K562 (cell line): ENCODE measurements at regions of chr5 and their contacts with region 1.

Region 1: DNA sequence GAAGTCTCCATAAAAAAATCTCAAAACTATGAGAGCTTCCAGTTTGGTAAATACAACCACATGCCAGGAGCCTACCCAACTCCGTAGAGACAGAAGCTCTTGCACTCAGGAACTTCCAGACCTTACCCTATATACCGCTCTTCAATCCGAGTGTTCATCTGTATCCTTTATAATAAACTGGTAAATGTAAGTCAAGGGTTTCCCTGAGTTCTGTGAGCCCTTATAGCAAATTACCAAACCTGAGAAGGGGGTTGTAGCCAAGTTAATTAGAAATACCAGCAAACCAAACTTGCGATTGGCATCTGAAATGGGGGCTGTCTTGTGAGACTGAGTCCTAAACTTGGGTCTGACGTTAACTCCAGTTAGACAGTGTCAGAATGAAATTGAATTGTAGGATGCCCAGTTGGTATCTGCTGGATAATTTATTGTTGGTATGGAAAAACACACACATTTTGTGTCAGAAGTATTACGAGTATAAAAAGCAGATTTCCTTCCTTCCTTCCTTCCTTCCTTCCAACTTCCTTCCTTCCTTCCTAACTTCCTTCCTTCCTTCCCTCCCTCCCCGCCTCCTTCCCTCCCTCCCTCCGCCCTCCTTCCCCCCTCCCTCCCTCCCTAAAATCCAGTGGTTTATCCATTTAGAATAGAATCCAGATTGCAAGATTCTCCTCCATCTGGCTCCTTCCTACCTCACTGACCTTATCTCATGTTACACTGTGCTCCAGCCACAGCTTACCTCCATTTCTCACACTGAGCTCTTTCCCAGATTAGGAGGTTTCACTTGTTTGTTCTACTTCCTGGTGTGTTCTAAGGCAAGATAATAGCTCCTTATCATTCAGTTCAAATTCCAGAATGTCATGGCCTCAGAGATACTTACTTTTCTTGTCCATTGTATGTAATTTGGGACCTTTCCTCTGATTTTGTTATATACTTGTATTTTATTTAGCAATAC is 196.7 kb downstream of the WDR70 start:
- DNase-seq: peak; percentile 23 to 86 (median 60)
- ATAC-seq: peak; percentile 95
- H3K4me3 ChIP-seq: no peak overlapping the region
- H3K27ac ChIP-seq: no peak overlapping the region
- H3K4me1 ChIP-seq: peaks cover 0 to 19% of the 10 kb centered on the region in 2 experiments; a peak in 3 of 5 replicates
- H3K27me3 ChIP-seq: no peaks in the 10 kb centered on the region
- CTCF ChIP-seq: no peak
- EP300 ChIP-seq: peak; percentile 92
- POLR2A ChIP-seq: no peak
- RAD21 ChIP-seq: 0 out of 4 replicates have a peak, but pooled peaks of 1 of the 2 experiments have one; percentile 6

Region 2: DNA sequence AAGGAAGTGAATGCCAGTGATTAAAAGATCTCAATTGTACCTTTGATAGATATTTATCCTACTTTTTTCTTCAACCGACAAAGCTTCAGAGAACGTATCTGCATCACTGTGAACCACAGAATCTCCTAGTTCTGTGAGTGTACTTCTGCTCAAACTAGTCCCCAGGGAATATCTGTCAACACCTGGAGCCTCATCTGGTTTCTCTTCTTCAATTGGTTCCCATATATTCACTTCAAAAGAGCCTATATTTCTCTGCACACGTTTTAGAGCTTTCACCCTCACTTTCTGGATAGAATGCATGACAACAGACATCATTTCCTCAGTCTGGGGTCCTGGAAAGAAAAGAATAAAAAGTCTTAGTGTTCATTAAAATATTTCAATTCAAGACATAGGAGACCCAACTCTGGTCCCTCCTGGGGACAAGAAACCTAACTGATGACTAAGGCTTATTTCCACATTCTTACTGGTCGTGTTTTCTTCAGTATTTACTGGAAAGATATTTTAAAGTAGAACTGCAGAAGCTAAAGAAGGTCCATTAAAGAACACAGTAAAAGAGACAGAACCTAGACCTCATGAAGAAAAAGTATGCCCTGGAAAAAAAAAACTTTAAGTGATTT is 391.0 kb before region 1 on chr5:
- CTCF ChIA-PET with region 1: no interaction called
- POLR2A ChIA-PET with region 1: no interaction called
- in situ Hi-C with region 1: no loop called
- intact Hi-C with region 1: no loop called
- DNase-seq: no peak
- ATAC-seq: no peak
- H3K4me3 ChIP-seq: no peak overlapping the region
- H3K27ac ChIP-seq: no peak overlapping the region
- H3K4me1 ChIP-seq: 0 out of 5 replicates have a peak, but pooled peaks cover 0 to 2% of the 10 kb centered on the region in 2 experiments
- H3K27me3 ChIP-seq: peaks cover 0 to 3% of the 10 kb centered on the region in 2 experiments; a peak in 1 of 5 replicates
- CTCF ChIP-seq: no peak
- EP300 ChIP-seq: no peak
- POLR2A ChIP-seq: no peak
- RAD21 ChIP-seq: no peak

Region 3: DNA sequence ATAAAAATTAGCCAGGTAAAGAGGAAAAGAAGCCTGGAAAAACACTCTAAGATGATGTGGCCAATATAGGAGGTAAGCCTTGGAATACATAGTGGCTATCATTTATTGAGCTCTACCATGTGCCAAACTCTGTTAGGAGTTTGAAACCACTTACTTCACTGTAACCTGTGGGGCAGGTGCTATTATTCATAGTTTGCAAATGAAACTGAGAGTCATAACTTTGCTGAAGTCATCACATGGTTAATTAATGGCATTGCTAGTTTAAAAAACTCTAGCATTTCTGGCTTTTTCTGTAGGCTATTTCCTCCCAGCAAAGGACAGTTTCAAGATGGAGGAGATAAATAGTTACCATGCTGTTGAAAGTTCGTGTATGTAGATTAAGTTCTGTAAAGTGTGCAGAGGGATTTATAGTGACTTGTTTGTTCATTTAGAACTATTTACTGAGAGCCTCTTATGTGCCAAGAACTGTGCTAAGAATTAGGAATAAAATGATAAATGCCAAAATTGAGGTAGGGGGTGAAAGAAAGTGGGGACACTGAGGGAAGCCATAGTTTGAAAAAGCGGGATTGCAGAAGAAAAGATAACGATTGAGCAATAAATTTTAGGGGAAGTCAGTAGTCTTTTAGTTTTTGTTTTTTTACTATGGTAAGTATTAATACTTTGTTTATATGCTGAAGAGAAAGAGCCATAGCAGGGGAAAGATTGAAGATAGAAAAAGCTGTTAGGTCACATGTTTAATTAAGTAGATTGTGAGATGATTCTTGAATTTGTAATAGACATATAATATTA is 139.5 kb before region 1 on chr5:
- CTCF ChIA-PET with region 1: no interaction called
- POLR2A ChIA-PET with region 1: no interaction called
- in situ Hi-C with region 1: no loop called
- intact Hi-C with region 1: no loop called
- DNase-seq: no peak
- ATAC-seq: peak; percentile 27; the same call in 1 of the 3 replicates
- H3K4me3 ChIP-seq: no peak overlapping the region
- H3K27ac ChIP-seq: no peak overlapping the region
- H3K4me1 ChIP-seq: no peaks in the 10 kb centered on the region
- H3K27me3 ChIP-seq: no peaks in the 10 kb centered on the region
- CTCF ChIP-seq: no peak
- EP300 ChIP-seq: no peak
- POLR2A ChIP-seq: no peak
- RAD21 ChIP-seq: no peak

Region 4: GRCh38 chr5:37557734-37558293 is 18.0 kb before region 1 on chr5:
- CTCF ChIA-PET with region 1: no interaction called
- POLR2A ChIA-PET with region 1: no interaction called
- in situ Hi-C with region 1: no loop called
- intact Hi-C with region 1: no loop called
- DNase-seq: no peak
- ATAC-seq: no peak
- H3K4me3 ChIP-seq: no peak overlapping the region
- H3K27ac ChIP-seq: no peak overlapping the region
- H3K4me1 ChIP-seq: peaks cover 4 to 10% of the 10 kb centered on the region in 2 experiments; a peak in 4 of 5 replicates
- H3K27me3 ChIP-seq: no peaks in the 10 kb centered on the region
- CTCF ChIP-seq: no peak
- EP300 ChIP-seq: no peak
- POLR2A ChIP-seq: no peak
- RAD21 ChIP-seq: no peak

Region 5: GRCh38 chr5:37668524-37669047 is 92.8 kb after region 1 on chr5:
- CTCF ChIA-PET with region 1: no interaction called
- POLR2A ChIA-PET with region 1: interaction called, 3 read pairs
- in situ Hi-C with region 1: no loop called
- intact Hi-C with region 1: loop called (anchors 10 kb)
- DNase-seq: peak; percentile 29 to 78 (median 44)
- ATAC-seq: peak; percentile 84
- H3K4me3 ChIP-seq: no peak overlapping the region
- H3K27ac ChIP-seq: peak overlapping the region; percentile 46; the same call in 1 of the 3 replicates
- H3K4me1 ChIP-seq: peaks cover 2 to 22% of the 10 kb centered on the region in 2 experiments; a peak in 4 of 5 replicates
- H3K27me3 ChIP-seq: no peaks in the 10 kb centered on the region
- CTCF ChIP-seq: no peak
- EP300 ChIP-seq: peak; percentile 65
- POLR2A ChIP-seq: no peak
- RAD21 ChIP-seq: no peak